Motor neuron (in vitro differentiated cells): ENCODE measurements at regions of chr21 and their contacts with region 1.

Region 1: DNA sequence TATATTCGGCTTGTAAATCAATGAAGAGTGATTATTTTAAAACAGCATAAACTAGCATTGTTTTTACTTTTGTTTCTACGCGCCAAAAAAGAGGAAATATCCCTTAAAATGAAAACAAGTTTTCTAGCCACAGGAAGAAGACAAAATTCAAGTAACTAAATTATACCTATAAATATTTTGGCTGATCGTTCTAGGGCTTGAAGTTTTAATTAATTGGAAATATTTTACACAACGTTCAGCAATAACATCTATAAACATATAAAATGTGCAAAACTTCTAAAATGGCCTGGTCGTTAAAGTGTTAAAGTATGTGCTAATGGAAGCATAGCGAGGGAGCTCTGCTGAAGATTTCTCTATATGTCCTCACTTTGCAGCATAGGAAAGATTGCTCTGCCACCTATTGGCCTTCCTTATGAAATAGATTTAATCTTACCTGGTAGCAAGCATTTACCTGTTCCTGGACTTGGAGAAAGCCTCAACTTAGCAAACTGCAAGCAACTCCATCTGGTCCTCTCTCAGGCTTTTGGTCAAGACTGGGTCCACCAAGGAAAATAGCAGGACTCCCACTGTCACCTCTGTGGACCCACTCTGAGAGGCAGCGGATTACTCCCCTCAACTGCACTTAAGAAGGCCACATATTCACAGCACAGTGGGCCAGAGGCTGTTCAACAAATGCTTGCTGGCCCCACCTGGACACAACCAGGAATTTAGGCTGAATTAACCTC is 351.3 kb upstream of the RUNX1 start:
- ATAC-seq: peak in 6 of 8 experiments; percentile 39 to 85 (median 57)
- H3K4me3 ChIP-seq: no peak overlapping the region
- H3K27ac ChIP-seq: no peak overlapping the region
- H3K4me1 ChIP-seq: no peaks in the 10 kb centered on the region

Region 2: GRCh38 chr21:35616090-35616489 is 215.7 kb after region 1 on chr21:
- in situ Hi-C with region 1: loop called in 1 of 9 experiments (anchors 25 kb)
- ATAC-seq: peak in 1 of 8 experiments; percentile 9
- H3K4me3 ChIP-seq: no peak overlapping the region
- H3K27ac ChIP-seq: no peak overlapping the region
- H3K4me1 ChIP-seq: no peaks in the 10 kb centered on the region

Region 3: DNA sequence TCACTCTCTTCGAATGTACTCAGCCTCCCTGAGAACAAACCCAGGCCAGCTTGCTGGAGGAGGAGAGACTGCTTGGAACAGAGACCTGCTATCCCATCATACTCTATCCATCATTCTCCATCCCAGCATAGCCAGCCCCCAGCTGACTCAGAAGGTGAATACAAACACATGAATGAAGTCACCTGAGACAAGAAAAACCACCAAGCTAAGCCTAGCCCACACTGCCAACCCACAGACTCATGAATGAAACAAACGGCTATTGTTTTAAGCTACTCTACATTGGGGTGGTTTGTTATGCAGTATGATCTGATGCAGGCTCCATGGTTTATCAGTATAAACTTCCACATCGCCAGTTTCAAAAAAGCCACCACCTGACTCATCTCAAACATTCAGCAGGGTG is 264.3 kb after region 1 on chr21:
- in situ Hi-C with region 1: no loop called
- ATAC-seq: no peak
- H3K4me3 ChIP-seq: no peak overlapping the region
- H3K27ac ChIP-seq: no peak overlapping the region
- H3K4me1 ChIP-seq: no peaks in the 10 kb centered on the region